ENCODE measurements at regions of chr2 and their contacts with region 1.

Region 1: DNA sequence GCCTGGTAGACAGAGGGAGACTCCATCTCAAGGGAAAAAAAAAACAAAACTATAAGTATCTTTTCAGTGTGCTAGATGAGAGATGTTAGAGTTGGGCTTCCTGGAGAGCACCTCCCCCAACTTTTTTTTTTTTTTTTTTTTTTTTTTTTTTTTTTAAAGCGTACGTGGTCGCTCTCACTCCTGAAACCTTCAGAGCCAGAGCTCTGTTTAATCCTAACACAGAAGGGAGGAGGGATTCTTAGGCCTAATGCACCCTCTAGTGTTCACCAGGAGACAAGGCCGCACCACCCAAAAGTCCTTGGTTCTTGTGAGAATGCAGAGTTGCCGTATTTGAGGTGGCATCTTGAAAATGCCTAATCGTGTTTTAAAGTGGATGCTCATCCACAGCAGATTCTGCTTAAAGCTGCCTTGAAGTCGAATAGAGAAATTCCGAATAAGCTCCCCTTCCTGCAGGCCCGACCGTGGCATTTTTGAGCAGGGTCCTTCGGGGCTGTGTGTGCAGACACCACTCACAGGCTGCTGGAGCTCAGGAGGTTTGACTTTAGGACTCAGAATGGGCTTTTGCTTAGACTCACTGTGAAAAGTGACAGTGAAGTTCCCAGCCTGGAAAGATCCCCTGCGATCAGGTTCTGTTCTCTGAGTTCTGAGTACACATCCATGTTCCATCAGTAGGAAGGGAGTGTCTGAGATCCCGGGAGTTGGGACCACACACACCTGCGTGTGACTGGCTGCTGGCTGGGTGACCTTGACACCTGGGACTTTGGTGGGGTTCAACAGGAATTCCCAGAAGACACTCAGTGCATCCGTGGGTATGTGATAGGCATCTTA is 252.6 kb downstream of the AGAP1 start:
- DNase-seq: peak; percentile 54
- H3K4me3 Mint-ChIP-seq: no peak overlapping the region
- H3K27ac Mint-ChIP-seq: no peak overlapping the region
- H3K4me1 Mint-ChIP-seq: no peaks in the 10 kb centered on the region
- H3K27me3 Mint-ChIP-seq: no peaks in the 10 kb centered on the region

Region 2: DNA sequence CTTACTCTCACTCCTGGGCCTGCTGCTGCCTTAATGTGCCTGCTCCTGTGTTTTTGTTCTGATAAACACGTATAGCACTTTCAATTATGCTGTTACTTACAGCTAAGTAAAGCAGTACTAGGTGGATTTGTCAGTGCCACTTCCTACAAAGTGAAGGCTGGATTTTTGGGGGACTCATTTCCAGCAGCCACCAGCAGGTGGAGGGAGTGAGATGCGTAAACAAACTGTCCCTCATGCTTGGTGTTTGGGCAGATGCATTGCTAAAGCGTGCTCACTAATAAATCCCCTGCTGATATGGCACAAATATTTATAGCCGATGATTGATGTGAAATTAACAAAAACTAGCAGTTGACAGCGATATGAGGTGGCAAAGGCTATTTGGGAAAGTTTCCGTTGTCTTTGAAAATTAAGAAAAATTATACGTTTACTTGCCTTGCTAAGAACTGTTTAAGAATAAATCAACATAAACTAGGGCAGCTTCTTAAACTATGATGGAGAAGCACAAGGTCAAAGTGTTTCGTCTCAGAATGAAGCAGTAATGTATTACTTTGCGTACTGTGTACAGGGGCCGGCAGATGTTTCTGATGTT is 151.0 kb before region 1 on chr2:
- CTCF ChIA-PET with region 1: interaction called, 73 read pairs
- POLR2A ChIA-PET with region 1: no interaction called
- DNase-seq: peak; percentile 55
- H3K4me3 Mint-ChIP-seq: no peak overlapping the region
- H3K27ac Mint-ChIP-seq: no peak overlapping the region
- H3K4me1 Mint-ChIP-seq: no peaks in the 10 kb centered on the region
- H3K27me3 Mint-ChIP-seq: no peaks in the 10 kb centered on the region

Region 3: DNA sequence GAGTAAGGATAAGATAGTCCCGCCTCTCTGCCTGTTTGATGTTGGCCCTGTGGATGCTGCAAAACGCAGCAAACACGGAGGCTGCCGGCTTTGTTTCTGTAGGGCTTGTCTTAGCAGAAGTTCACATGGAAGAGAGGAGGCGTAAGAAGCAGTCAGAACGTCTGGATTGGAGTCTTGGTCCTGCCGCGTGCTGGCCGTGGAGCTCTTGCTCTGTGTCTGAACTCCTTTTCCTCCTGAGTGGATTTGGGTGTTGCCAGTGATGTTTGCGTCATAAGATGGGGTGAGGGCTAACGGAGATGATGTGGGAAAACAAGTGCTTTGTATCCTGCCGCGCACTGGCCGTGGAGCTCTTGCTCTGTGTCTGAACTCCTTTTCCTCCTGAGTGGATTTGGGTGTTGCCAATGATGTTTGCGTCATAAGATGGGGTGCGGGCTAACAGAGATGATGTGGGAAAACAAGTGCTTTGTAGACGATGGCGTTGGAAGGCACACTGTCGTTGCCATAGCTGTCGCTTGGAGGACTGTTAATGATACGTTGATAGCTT is 11.7 kb before region 1 on chr2:
- CTCF ChIA-PET with region 1: interaction called, 11 read pairs
- POLR2A ChIA-PET with region 1: no interaction called
- DNase-seq: no peak
- H3K4me3 Mint-ChIP-seq: no peak overlapping the region
- H3K27ac Mint-ChIP-seq: no peak overlapping the region
- H3K4me1 Mint-ChIP-seq: no peaks in the 10 kb centered on the region
- H3K27me3 Mint-ChIP-seq: no peaks in the 10 kb centered on the region

Region 4: GRCh38 chr2:235766278-235766677 is 19.8 kb after region 1 on chr2:
- CTCF ChIA-PET with region 1: interaction called, 11 read pairs
- POLR2A ChIA-PET with region 1: no interaction called
- DNase-seq: peak; percentile 51
- H3K4me3 Mint-ChIP-seq: no peak overlapping the region
- H3K27ac Mint-ChIP-seq: no peak overlapping the region
- H3K4me1 Mint-ChIP-seq: no peaks in the 10 kb centered on the region
- H3K27me3 Mint-ChIP-seq: no peaks in the 10 kb centered on the region

Measured in activated CD4-positive, alpha-beta memory T cell treated with anti-CD3 and anti-CD28 coated beads, Interleukin-2, amount 10 ng/mL, durations not matched to agents 7 days and 5 days (primary cell).